Tibial artery (tissue), 4 donors: ENCODE measurements at regions of chr19 and their contacts with region 1.

Region 1: GRCh38 chr19:1825909-1826556 is 14.0 kb upstream of the ATP8B3 start:
- DNase-seq: peak; percentile 68 to 80
- H3K4me3 ChIP-seq: no peak overlapping the region
- H3K27ac ChIP-seq: no peak overlapping the region
- H3K4me1 ChIP-seq: peaks cover 0 to 14% (median 10%) of the 10 kb centered on the region in 4 donors
- H3K27me3 ChIP-seq: no peaks in the 10 kb centered on the region
- CTCF ChIP-seq: peak; percentile 88 to 89

Region 2: DNA sequence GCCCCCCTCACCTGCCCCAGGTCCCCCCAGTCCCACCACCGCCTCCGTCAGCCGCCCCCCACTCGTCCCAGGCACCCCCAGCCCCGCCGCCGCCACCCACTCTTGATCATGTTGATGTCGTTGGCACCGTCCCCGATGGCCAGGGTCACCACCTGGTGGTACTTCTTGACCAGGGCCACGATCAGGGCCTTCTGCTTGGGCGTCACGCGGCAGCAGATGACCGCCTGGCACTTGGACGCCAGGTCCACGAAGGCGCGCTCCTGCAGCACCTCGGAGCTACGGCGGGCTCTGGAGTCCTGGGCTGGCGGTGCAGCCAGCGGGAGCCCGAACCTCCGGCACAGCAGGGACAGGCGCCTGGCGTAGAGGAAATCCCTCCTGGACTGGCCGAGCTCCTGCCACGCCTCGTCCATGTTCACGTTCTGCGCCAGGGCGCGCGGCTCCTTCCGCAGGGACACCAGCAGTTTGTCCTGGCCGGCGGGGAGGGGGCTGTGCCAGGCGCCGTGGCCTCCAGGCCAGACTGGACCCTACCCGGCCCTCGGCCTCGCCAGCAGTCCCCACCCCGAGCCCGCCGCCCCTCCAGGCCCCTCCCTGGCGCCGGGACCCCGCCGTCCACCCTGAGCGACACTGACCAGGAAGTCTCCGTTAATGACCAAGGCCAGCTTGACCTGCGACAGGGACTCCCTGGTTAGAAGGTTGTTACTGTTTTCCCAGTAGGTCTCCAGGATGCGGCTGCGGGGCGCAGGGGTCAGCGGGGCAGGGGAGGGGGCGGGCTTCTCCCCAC is 36.6 kb before region 1 on chr19:
- intact Hi-C with region 1: loop called (anchors 5 kb)
- DNase-seq: no peak
- H3K4me3 ChIP-seq: no peak overlapping the region
- H3K27ac ChIP-seq: no peak overlapping the region
- H3K4me1 ChIP-seq: peaks cover 0 to 14% (median 0%) of the 10 kb centered on the region in 4 donors
- H3K27me3 ChIP-seq: peaks cover 0 to 74% of the 10 kb centered on the region in 2 donors
- CTCF ChIP-seq: no peak